ENCODE measurements at regions of chr20 and their contacts with region 1.

Region 1: DNA sequence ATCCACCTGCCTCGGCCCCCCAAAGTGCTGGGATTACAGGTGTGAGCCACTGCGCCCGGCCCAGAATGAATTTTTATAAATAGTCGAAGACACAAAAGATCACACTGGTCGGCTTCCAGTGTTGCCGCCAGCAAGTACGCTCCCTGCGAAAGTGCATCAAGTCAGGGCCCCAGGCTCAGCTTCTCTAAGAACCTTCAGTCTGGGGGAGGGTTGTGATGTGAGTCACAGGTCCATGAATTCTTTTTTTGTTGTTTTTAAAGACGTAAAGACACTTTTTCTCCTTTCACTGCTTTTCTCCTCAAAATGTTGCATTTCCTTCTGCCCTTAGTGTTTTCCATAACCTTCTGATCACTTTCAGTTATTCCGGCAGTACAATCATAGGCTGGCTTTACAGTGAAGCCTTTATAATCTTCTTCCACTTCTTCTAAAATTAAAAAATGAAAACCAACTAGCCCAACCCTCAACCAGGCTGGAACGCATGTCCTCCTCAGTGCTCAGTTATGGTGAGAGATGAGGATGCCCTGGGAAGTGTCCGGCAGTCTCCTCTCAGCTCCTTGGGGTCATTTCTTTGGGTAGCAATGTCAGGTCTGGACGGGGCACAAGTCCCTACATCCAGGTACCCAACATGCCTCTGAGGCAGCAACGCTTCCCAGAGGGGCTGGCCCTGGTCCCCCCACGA is 66.6 kb downstream of the CSE1L start:
- DNase-seq: no peak
- H3K4me3 ChIP-seq: no peak overlapping the region
- H3K4me3 Mint-ChIP-seq: no peak overlapping the region
- H3K27ac Mint-ChIP-seq: no peak overlapping the region
- H3K4me1 ChIP-seq: no peaks in the 10 kb centered on the region
- H3K4me1 Mint-ChIP-seq: no peaks in the 10 kb centered on the region
- H3K27me3 ChIP-seq: no peaks in the 10 kb centered on the region
- H3K27me3 Mint-ChIP-seq: no peaks in the 10 kb centered on the region
- CTCF ChIP-seq: no peak

Region 2: GRCh38 chr20:49166534-49167449 is 54.1 kb after region 1 on chr20:
- CTCF ChIA-PET with region 1: no interaction called
- POLR2A ChIA-PET with region 1: no interaction called
- intact Hi-C with region 1: loop called (anchors 2 kb)
- DNase-seq: no peak
- H3K4me3 ChIP-seq: no peak overlapping the region
- H3K4me3 Mint-ChIP-seq: no peak overlapping the region
- H3K27ac Mint-ChIP-seq: no peak overlapping the region
- H3K4me1 ChIP-seq: peaks cover 4% of the 10 kb centered on the region; the same call in 1 of the 2 replicates
- H3K4me1 Mint-ChIP-seq: peaks cover 8% of the 10 kb centered on the region
- H3K27me3 ChIP-seq: no peaks in the 10 kb centered on the region
- H3K27me3 Mint-ChIP-seq: no peaks in the 10 kb centered on the region
- CTCF ChIP-seq: no peak

Measured in Caco-2 (cell line).